AG04449 (cell line): ENCODE measurements at regions of chr19 and their contacts with region 1.

Region 1: DNA sequence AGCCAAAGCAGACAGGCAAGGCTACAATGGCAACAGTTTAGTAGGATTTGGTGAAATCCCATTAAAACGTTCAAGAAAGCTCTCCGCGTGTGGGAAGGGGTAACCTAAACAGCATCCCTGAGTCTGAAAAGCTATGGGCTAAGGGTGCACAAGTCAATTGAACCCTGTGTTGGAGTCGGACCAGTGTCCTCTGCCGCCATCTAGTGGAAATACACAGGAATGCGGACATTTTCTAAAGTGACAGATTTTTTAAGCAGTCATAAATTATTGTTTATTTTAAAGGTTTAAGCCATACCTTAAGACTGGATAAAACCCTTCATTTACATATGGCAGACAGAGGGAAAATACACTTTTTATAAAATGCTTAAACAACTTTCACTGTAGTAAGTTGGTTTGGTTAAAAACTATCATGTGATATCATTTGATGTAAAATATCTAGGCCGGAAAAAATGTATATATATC is 26.5 kb upstream of the LSM14A start:
- DNase-seq: no peak
- H3K4me3 ChIP-seq: no peak overlapping the region
- CTCF ChIP-seq: peak; percentile 64

Region 2: GRCh38 chr19:33785795-33786194 is 360.0 kb before region 1 on chr19:
- CTCF ChIA-PET with region 1: interaction called, 11 read pairs
- POLR2A ChIA-PET with region 1: no interaction called
- DNase-seq: no peak
- H3K4me3 ChIP-seq: no peak overlapping the region
- CTCF ChIP-seq: no peak

Region 3: GRCh38 chr19:34041925-34042521 is 103.7 kb before region 1 on chr19:
- CTCF ChIA-PET with region 1: interaction called, 26 read pairs
- POLR2A ChIA-PET with region 1: no interaction called
- DNase-seq: no peak
- H3K4me3 ChIP-seq: no peak overlapping the region
- CTCF ChIP-seq: peak; percentile 84

Region 4: GRCh38 chr19:34120846-34121639 is 24.7 kb before region 1 on chr19:
- CTCF ChIA-PET with region 1: interaction called, 58 read pairs
- POLR2A ChIA-PET with region 1: no interaction called
- DNase-seq: no peak
- H3K4me3 ChIP-seq: no peak overlapping the region
- CTCF ChIP-seq: peak; percentile 80

Region 5: GRCh38 chr19:34134190-34135053 is 11.3 kb before region 1 on chr19:
- CTCF ChIA-PET with region 1: interaction called, 54 read pairs
- POLR2A ChIA-PET with region 1: no interaction called
- DNase-seq: no peak
- H3K4me3 ChIP-seq: peak overlapping the region; percentile 73
- CTCF ChIP-seq: no peak